Mammary epithelial cell (primary cell): ENCODE measurements at regions of chr11 and their contacts with region 1.

Region 1: GRCh38 chr11:83819933-83820549 is 533.9 kb upstream of the CCDC90B start:
- DNase-seq: peak; percentile 48
- H3K4me3 ChIP-seq: no peak overlapping the region
- H3K27ac ChIP-seq: no peak overlapping the region
- H3K4me1 ChIP-seq: no peaks in the 10 kb centered on the region
- H3K27me3 ChIP-seq: no peaks in the 10 kb centered on the region
- CTCF ChIP-seq: peak; percentile 52 to 60

Region 2: DNA sequence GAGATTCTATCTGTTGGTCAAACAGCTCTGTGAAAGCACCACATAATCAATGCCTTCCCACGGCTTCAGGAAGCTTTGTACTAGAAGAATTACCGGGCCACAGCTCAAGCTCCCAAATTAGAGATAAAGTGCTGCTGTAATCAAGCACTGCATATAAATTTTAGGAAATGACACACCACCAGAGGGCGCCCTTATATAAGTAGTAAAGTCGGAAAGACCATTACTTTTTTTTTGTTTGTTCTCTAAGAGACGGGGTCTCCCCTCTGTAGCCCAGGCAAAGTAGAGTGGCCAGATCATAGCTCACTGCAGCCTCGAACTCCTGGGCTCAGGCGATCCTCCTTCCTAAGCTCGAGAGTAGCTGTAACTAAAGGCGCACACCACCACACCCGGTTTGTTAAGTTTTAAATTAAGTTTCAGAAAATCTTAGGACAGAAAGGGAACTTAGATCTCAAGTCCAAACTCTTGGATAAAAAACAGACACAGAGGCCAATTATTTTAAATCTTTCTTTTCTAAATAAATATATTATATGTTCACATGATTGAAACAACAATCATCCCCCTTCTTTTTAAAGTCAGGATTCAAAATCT is 952.5 kb before region 1 on chr11:
- CTCF ChIA-PET with region 1: no interaction called
- dilution Hi-C with region 1: no loop called
- in situ Hi-C with region 1: loop called in 1 of 2 experiments (anchors 25 kb)
- intact Hi-C with region 1: loop called (anchors 1 kb)
- DNase-seq: peak; percentile 44
- H3K4me3 ChIP-seq: peak overlapping the region in 1 of 3 experiments; percentile 30
- H3K27ac ChIP-seq: no peak overlapping the region
- H3K4me1 ChIP-seq: peaks cover 14% of the 10 kb centered on the region
- H3K27me3 ChIP-seq: no peaks in the 10 kb centered on the region
- CTCF ChIP-seq: peak; percentile 51 to 60

Region 3: GRCh38 chr11:83241291-83241946 is 578.6 kb before region 1 on chr11:
- CTCF ChIA-PET with region 1: no interaction called
- dilution Hi-C with region 1: no loop called
- in situ Hi-C with region 1: no loop called
- intact Hi-C with region 1: loop called (anchors 2 kb)
- DNase-seq: peak; percentile 59
- H3K4me3 ChIP-seq: no peak overlapping the region
- H3K27ac ChIP-seq: no peak overlapping the region
- H3K4me1 ChIP-seq: no peaks in the 10 kb centered on the region
- H3K27me3 ChIP-seq: no peaks in the 10 kb centered on the region
- CTCF ChIP-seq: peak; percentile 65 to 74

Region 4: GRCh38 chr11:83292709-83293456 is 527.2 kb before region 1 on chr11:
- CTCF ChIA-PET with region 1: interaction called, 4 read pairs
- dilution Hi-C with region 1: no loop called
- in situ Hi-C with region 1: loop called in 1 of 2 experiments (anchors 25 kb)
- intact Hi-C with region 1: loop called (anchors 1 kb)
- DNase-seq: peak; percentile 50
- H3K4me3 ChIP-seq: no peak overlapping the region
- H3K27ac ChIP-seq: no peak overlapping the region
- H3K4me1 ChIP-seq: no peaks in the 10 kb centered on the region
- H3K27me3 ChIP-seq: no peaks in the 10 kb centered on the region
- CTCF ChIP-seq: peak; percentile 70 to 76

Region 5: GRCh38 chr11:83521647-83522596 is 298.1 kb before region 1 on chr11:
- CTCF ChIA-PET with region 1: no interaction called
- dilution Hi-C with region 1: no loop called
- in situ Hi-C with region 1: no loop called
- intact Hi-C with region 1: loop called (anchors 2 kb)
- DNase-seq: no peak
- H3K4me3 ChIP-seq: no peak overlapping the region
- H3K27ac ChIP-seq: no peak overlapping the region
- H3K4me1 ChIP-seq: no peaks in the 10 kb centered on the region
- H3K27me3 ChIP-seq: peaks cover 2% of the 10 kb centered on the region
- CTCF ChIP-seq: peak in 1 of 2 donors; percentile 54

Region 6: DNA sequence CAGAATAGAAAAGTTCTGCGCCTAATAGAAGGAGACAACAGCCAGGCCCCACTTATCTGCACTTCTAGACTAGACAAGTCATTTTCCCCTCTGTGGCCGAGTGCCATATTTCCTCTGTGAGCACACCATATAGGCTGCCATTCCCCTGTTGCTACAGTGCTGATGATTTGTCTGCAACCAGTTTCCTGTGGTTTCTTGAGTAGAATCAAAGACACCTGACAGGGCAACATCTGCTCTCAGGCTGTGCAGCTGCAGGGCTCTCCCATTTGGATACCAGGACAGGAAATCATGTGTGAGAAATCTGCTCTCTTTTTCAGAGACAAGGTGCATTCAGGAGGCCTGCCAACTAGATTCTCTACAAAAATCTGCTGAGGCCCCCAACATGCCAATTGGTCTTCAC is 927.8 kb after region 1 on chr11:
- CTCF ChIA-PET with region 1: no interaction called
- dilution Hi-C with region 1: no loop called
- in situ Hi-C with region 1: no loop called
- intact Hi-C with region 1: no loop called
- DNase-seq: no peak
- H3K4me3 ChIP-seq: no peak overlapping the region
- H3K27ac ChIP-seq: no peak overlapping the region
- H3K4me1 ChIP-seq: no peaks in the 10 kb centered on the region
- H3K27me3 ChIP-seq: no peaks in the 10 kb centered on the region
- CTCF ChIP-seq: no peak